ENCODE measurements at regions of chr5 and their contacts with region 1.

Region 1: DNA sequence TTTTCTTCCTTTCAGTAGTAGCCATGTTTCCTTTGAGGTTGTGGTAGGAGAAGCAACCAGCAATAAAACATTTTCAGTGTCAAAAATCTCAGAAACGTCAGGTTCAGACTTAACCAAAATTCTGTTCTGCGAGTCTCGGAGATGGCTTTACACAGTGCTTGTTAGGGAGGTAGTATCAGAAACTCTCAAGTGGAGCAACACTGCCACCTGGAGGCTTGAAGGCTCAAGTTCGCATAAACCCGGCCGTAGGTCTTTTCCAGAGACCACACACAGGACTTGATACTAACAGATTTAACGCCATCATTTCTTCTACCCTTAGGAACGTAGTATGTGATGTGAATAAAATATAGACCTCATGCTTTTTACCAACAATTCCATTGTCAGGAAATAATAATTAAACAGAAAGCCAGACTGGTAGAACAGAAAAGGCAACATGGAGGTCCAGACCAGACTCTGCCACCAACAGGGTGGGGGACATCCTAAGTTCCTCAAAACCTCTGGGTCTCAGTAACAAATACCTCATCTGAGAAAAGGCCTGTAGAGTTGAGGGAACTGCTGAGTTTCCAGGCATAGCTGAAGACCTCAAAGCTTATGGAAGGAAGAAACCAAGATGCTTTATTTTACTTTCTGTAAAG is 8.5 kb downstream of the PTGER4 start:
- DNase-seq: peak; percentile 72 to 87 (median 81)
- H3K4me3 ChIP-seq: peak overlapping the region; percentile 1
- H3K4me3 Mint-ChIP-seq: peak overlapping the region; percentile 91 to 100 (median 98)
- H3K27ac ChIP-seq: no peak overlapping the region
- H3K27ac Mint-ChIP-seq: peak overlapping the region; percentile 84 to 96 (median 94)
- H3K4me1 ChIP-seq: peaks cover 60% of the 10 kb centered on the region
- H3K4me1 Mint-ChIP-seq: peaks cover 80 to 93% (median 88%) of the 10 kb centered on the region in 3 donors
- H3K27me3 ChIP-seq: no peaks in the 10 kb centered on the region
- H3K27me3 Mint-ChIP-seq: no peaks in the 10 kb centered on the region

Region 2: DNA sequence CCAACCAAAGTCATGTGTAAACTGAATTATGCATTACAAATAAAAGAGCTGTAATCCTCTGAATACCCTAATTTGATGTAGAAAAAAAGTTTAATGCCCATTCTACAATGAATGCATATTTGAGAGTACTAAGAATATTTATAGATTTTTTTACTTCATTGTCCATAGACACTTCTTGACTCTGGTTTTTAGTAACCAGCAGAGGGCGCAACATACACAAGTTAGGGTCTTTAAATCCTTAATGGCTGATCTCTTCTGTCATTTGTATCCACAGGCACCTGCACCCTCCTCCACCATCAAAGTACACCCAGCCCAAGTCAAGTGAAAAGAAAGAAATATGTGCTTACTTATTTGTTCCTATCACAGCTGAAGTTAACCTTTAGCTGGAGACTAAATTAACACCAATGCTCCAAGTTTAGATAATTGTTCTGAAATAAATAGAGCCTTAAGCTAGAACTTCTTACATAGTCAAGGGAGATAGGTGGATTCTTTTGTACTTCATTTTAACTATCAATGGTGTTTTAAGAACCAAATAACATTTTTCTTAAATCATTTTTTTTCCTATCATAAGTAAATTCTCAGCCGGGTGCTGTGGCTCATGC is 739.3 kb before region 1 on chr5:
- CTCF ChIA-PET with region 1: interaction called, 21 read pairs
- POLR2A ChIA-PET with region 1: no interaction called
- DNase-seq: peak; percentile 29 to 72 (median 58)
- H3K4me3 ChIP-seq: no peak overlapping the region
- H3K4me3 Mint-ChIP-seq: no peak overlapping the region
- H3K27ac ChIP-seq: no peak overlapping the region
- H3K27ac Mint-ChIP-seq: no peak overlapping the region
- H3K4me1 ChIP-seq: no peaks in the 10 kb centered on the region
- H3K4me1 Mint-ChIP-seq: peaks cover 2 to 5% (median 4%) of the 10 kb centered on the region in 3 donors
- H3K27me3 ChIP-seq: no peaks in the 10 kb centered on the region
- H3K27me3 Mint-ChIP-seq: no peaks in the 10 kb centered on the region

Measured in CD8-positive, alpha-beta memory T cell (primary cell).